K562 (cell line): ENCODE measurements at regions of chr22 and their contacts with region 1.

Region 1: DNA sequence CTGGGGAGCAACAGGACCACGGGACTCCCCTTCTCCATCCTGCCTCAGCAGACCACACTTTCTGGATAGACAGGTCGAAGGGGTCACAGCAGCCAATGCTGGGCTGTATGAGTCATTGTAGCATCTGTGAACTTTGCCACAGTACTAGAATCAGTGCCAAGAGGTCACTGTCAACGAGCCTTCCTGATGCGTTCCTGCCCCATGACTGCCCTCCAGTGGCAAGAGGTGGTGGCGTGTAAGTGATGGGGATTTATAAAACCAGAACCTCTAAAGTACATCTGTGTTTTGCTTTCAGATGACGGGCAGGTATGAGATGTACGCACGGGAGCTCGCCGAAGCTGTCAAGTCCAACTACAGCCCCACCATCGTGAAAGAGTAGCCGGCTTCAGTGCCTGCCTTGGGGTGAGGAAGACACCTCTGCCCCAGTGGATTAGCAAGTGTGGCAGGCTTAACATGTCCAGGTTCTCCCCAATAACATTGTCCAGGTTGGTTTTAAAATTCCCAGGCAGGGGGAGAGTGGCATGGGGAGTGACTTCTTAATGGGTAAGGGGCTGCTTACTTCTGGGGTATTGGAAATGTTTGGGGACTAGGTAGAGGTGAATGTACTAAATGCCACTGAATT is 29.4 kb downstream of the GUCD1 start:
- DNase-seq: peak; percentile 77 to 82 (median 80)
- ATAC-seq: peak; percentile 96
- H3K4me3 ChIP-seq: no peak overlapping the region
- H3K27ac ChIP-seq: no peak overlapping the region
- H3K4me1 ChIP-seq: no peaks in the 10 kb centered on the region; a peak in 1 of 5 replicates
- H3K27me3 ChIP-seq: no peaks in the 10 kb centered on the region; a peak in 2 of 5 replicates
- CTCF ChIP-seq: peak; percentile 88 to 90 (median 88)
- EP300 ChIP-seq: no peak
- POLR2A ChIP-seq: no peak
- RAD21 ChIP-seq: peak; percentile 59 to 85

Region 2: DNA sequence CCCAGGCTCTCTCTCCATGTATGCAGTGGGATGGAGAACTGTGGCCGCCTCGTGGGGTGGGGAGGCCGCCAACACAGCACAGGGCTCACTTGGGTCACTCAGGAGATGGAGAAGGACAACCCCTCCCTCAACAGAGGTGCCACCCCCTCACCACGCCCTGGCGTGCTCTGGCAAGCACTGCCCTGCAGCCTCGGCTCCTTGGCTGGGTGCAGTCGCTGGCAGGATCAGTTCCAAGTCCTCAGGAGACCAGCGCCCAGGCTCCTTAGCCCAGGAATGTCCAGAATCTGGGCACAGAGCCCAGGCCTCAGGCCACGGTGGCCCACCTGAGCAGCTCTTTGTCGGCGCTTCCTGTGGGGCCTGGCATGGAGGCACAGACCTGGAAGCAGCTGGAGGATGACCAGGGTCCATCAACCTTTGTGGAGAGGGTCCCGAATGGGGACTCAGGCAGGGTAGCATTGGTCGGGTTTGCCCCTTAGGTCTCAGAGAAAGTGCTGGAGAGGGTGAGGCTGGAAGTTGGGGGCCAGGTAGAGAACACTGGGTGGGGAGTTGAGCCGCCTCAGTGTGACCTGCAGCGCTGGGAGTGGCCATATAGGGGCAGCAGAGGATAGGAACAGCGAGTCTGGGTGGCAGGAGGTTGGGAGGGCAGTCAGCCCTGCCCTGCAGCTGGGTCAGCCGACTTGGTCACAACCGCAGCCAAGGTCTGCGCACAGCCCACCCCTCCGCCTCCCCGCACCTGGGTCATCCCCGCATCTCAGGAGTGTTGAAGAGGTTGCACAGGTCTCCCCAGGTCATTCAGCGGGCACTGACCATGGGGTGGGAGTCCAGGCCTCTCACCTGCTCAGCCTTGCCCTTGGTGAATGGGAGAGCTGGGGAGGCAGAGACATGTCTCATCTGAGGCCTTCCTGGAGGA is 336.0 kb before region 1 on chr22:
- CTCF ChIA-PET with region 1: no interaction called
- POLR2A ChIA-PET with region 1: no interaction called
- in situ Hi-C with region 1: no loop called
- intact Hi-C with region 1: loop called (anchors 10 kb)
- DNase-seq: peak; percentile 56 to 76 (median 68)
- ATAC-seq: peak; percentile 89
- H3K4me3 ChIP-seq: no peak overlapping the region
- H3K27ac ChIP-seq: no peak overlapping the region
- H3K4me1 ChIP-seq: peaks cover 0 to 28% of the 10 kb centered on the region in 2 experiments; a peak in 1 of 5 replicates
- H3K27me3 ChIP-seq: peaks cover 0 to 16% of the 10 kb centered on the region in 2 experiments; a peak in 2 of 5 replicates
- CTCF ChIP-seq: peak; percentile 81 to 85 (median 85)
- EP300 ChIP-seq: no peak
- POLR2A ChIP-seq: no peak
- RAD21 ChIP-seq: peak; percentile 67 to 84

Region 3: GRCh38 chr22:24325105-24325757 is 200.3 kb before region 1 on chr22:
- CTCF ChIA-PET with region 1: interaction called, 8 read pairs
- POLR2A ChIA-PET with region 1: no interaction called
- in situ Hi-C with region 1: loop called (anchors 5 kb)
- intact Hi-C with region 1: loop called (anchors 10 kb)
- DNase-seq: peak; percentile 13 to 37 (median 16)
- ATAC-seq: no peak; the same call in 2 of the 3 replicates
- H3K4me3 ChIP-seq: no peak overlapping the region
- H3K27ac ChIP-seq: no peak overlapping the region
- H3K4me1 ChIP-seq: no peaks in the 10 kb centered on the region; a peak in 1 of 5 replicates
- H3K27me3 ChIP-seq: no peaks in the 10 kb centered on the region
- CTCF ChIP-seq: peak; percentile 20 to 59 (median 34); a peak in 3 of 6 replicates
- EP300 ChIP-seq: no peak
- POLR2A ChIP-seq: no peak
- RAD21 ChIP-seq: peak; percentile 67 to 68

Region 4: GRCh38 chr22:25388866-25389540 is 863.5 kb after region 1 on chr22:
- CTCF ChIA-PET with region 1: no interaction called
- POLR2A ChIA-PET with region 1: no interaction called
- in situ Hi-C with region 1: no loop called
- intact Hi-C with region 1: no loop called
- DNase-seq: no peak
- ATAC-seq: no peak
- H3K4me3 ChIP-seq: no peak overlapping the region
- H3K27ac ChIP-seq: no peak overlapping the region
- H3K4me1 ChIP-seq: peaks cover 0 to 24% of the 10 kb centered on the region in 2 experiments; a peak in 2 of 5 replicates
- H3K27me3 ChIP-seq: no peaks in the 10 kb centered on the region
- CTCF ChIP-seq: no peak
- EP300 ChIP-seq: no peak
- POLR2A ChIP-seq: no peak
- RAD21 ChIP-seq: no peak